Tibial artery (tissue), 4 donors: ENCODE measurements at regions of chr5 and their contacts with region 1.

Region 1: DNA sequence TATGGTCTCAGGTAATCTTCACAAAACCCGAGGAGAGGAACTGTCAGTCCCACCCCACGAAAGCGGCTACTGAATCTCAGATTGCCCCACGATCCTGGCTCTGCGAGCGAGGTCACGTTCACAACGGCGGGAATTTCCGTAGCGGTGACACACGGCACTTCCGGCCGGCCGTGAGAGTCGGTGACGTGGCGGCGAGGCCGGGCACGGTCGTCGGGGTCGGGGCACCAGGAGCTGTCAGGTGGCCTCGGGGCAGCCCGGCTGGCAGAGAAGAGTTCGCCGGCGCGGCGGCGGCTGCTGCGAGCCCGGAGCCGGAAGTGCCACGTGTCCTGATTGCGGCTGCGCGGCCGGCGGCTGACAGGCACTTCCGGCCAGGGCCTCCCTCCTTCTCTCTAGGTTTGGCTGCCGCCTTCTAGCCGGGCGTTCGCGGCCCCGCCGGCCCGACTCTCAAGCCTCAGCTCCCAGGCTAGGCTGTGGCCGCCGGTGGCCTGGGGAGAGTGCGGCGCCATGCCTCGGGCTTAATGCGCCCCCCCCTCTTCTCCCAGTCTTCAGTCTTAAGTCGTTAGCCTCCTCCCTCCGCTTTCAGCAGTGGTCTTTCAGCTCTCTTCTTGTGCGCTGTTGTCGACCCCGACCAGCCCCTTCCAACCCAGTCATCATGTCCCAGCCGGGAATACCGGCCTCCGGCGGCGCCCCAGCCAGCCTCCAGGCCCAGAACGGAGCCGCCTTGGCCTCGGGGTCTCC is at the start of gene SEC24A:
- DNase-seq: peak; percentile 88 to 95
- H3K4me3 ChIP-seq: peak within 1 kb of the TSS; percentile 67 to 81
- H3K27ac ChIP-seq: peak within 1 kb of the TSS; percentile 90 to 94
- H3K4me1 ChIP-seq: peaks cover 0 to 39% (median 30%) of the 10 kb centered on the region in 4 donors
- H3K27me3 ChIP-seq: no peaks in the 10 kb centered on the region
- CTCF ChIP-seq: no peak

Region 2: DNA sequence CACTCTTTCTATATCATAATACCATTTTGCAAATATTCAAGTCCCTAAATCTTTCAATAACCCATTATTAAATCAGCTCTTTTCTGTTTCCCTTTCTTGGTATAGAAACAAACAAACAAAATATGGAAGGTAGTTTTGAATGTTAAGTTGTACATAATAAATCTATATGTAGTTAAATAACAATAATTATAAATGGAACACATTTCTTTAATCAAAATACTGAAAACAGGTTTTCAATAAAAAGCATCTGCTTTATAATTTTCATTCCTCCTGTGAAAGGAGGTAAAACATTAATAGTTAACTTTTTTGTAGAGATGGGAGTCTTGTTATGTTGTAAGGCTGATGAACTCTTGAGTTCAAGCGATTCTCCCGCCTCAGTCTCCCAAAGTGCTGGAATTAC is 335.8 kb before region 1 on chr5:
- intact Hi-C with region 1: no loop called
- DNase-seq: no peak
- H3K4me3 ChIP-seq: no peak overlapping the region
- H3K27ac ChIP-seq: no peak overlapping the region
- H3K4me1 ChIP-seq: no peaks in the 10 kb centered on the region
- H3K27me3 ChIP-seq: no peaks in the 10 kb centered on the region
- CTCF ChIP-seq: no peak

Region 3: GRCh38 chr5:134489227-134489944 is 159.2 kb before region 1 on chr5:
- intact Hi-C with region 1: no loop called
- DNase-seq: peak in 1 of 2 donors; percentile 23
- H3K4me3 ChIP-seq: no peak overlapping the region
- H3K27ac ChIP-seq: no peak overlapping the region
- H3K4me1 ChIP-seq: no peaks in the 10 kb centered on the region
- H3K27me3 ChIP-seq: no peaks in the 10 kb centered on the region
- CTCF ChIP-seq: no peak

Region 4: DNA sequence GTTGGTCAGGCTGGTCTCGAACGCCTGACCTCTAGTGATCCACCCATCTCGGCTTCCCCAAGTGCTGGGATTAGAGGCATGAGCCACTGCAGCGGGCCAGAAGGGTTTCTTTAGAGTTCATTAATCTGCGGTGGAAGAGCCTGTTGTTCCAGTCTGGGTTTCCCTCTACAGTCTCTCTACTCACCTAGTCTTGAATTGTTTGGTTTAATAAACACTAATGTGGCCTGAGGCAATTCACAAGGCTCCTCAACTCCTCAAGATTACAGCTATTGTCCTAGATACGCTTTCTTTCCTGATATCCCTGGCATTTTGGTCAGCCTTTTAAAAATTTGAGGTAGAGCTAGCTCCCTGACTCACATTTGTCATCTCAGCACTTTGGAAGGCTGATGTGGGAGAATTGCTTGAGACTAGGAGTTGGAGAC is 11.4 kb before region 1 on chr5:
- intact Hi-C with region 1: loop called (anchors 2 kb)
- DNase-seq: no peak
- H3K4me3 ChIP-seq: no peak overlapping the region
- H3K27ac ChIP-seq: no peak overlapping the region
- H3K4me1 ChIP-seq: peaks cover 0 to 7% (median 3%) of the 10 kb centered on the region in 4 donors
- H3K27me3 ChIP-seq: no peaks in the 10 kb centered on the region
- CTCF ChIP-seq: no peak

Region 5: GRCh38 chr5:134769206-134769605 is 120.6 kb after region 1 on chr5:
- intact Hi-C with region 1: no loop called
- DNase-seq: no peak
- H3K4me3 ChIP-seq: no peak overlapping the region
- H3K27ac ChIP-seq: no peak overlapping the region
- H3K4me1 ChIP-seq: no peaks in the 10 kb centered on the region
- H3K27me3 ChIP-seq: no peaks in the 10 kb centered on the region
- CTCF ChIP-seq: no peak

Region 6: GRCh38 chr5:135364421-135365262 is 716.0 kb after region 1 on chr5:
- intact Hi-C with region 1: no loop called
- DNase-seq: no peak
- H3K4me3 ChIP-seq: no peak overlapping the region
- H3K27ac ChIP-seq: no peak overlapping the region
- H3K4me1 ChIP-seq: no peaks in the 10 kb centered on the region
- H3K27me3 ChIP-seq: no peaks in the 10 kb centered on the region
- CTCF ChIP-seq: no peak